CD4-positive, alpha-beta T cell (primary cell): ENCODE measurements at regions of chrX and their contacts with region 1.

Region 1: DNA sequence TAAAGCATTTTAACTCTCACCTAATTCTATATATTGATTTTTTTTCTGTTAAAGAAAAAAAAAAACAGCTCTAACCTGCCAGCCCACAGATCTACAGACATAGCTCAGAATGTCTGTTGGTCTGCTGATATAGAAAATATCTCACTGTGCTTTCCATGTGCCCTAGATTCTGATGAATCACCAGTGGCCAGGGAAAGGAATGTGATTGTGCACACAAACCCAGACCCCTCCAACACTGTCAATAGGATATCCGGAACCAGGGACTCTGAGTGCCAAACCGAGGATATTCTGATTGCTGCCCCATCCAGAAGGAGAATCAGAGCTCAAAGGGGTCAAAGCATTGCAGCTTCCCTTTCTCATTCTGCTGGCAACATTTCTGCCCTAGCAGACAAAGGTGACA is 12.1 kb upstream of the SCML1 start:
- DNase-seq: no peak
- ATAC-seq: no peak
- H3K4me3 ChIP-seq: no peak overlapping the region
- H3K4me3 Mint-ChIP-seq: no peak overlapping the region
- H3K27ac ChIP-seq: no peak overlapping the region
- H3K27ac Mint-ChIP-seq: no peak overlapping the region
- H3K4me1 ChIP-seq: no peaks in the 10 kb centered on the region
- H3K4me1 Mint-ChIP-seq: no peaks in the 10 kb centered on the region
- H3K27me3 ChIP-seq: no peaks in the 10 kb centered on the region
- H3K27me3 Mint-ChIP-seq: no peaks in the 10 kb centered on the region
- CTCF ChIP-seq: no peak

Region 2: GRCh38 chrX:16953606-16954220 is 771.5 kb before region 1 on chrX:
- CTCF ChIA-PET with region 1: no interaction called
- POLR2A ChIA-PET with region 1: no interaction called
- intact Hi-C with region 1: loop called in 1 of 2 experiments (anchors 10 kb)
- DNase-seq: no peak
- ATAC-seq: no peak
- H3K4me3 ChIP-seq: no peak overlapping the region
- H3K4me3 Mint-ChIP-seq: no peak overlapping the region
- H3K27ac ChIP-seq: no peak overlapping the region
- H3K27ac Mint-ChIP-seq: no peak overlapping the region
- H3K4me1 ChIP-seq: no peaks in the 10 kb centered on the region
- H3K4me1 Mint-ChIP-seq: no peaks in the 10 kb centered on the region
- H3K27me3 ChIP-seq: no peaks in the 10 kb centered on the region
- H3K27me3 Mint-ChIP-seq: peaks cover 10% of the 10 kb centered on the region
- CTCF ChIP-seq: no peak